ENCODE measurements at regions of chr5 and their contacts with region 1.

Region 1: GRCh38 chr5:15794052-15794985 is 294.3 kb downstream of the FBXL7 start:
- DNase-seq: no peak
- H3K4me3 ChIP-seq: no peak overlapping the region
- H3K27ac ChIP-seq: no peak overlapping the region
- H3K4me1 ChIP-seq: no peaks in the 10 kb centered on the region
- H3K27me3 ChIP-seq: no peaks in the 10 kb centered on the region
- CTCF ChIP-seq: no peak

Region 2: GRCh38 chr5:15105796-15106393 is 688.4 kb before region 1 on chr5:
- CTCF ChIA-PET with region 1: interaction called, 4 read pairs
- dilution Hi-C with region 1: no loop called
- in situ Hi-C with region 1: no loop called
- intact Hi-C with region 1: loop called (anchors 10 kb)
- DNase-seq: peak; percentile 41
- H3K4me3 ChIP-seq: no peak overlapping the region
- H3K27ac ChIP-seq: no peak overlapping the region
- H3K4me1 ChIP-seq: no peaks in the 10 kb centered on the region
- H3K27me3 ChIP-seq: no peaks in the 10 kb centered on the region
- CTCF ChIP-seq: peak; percentile 79 to 88

Region 3: GRCh38 chr5:15383469-15383868 is 410.9 kb before region 1 on chr5:
- CTCF ChIA-PET with region 1: no interaction called
- dilution Hi-C with region 1: no loop called
- in situ Hi-C with region 1: no loop called
- intact Hi-C with region 1: loop called (anchors 5 kb)
- DNase-seq: no peak
- H3K4me3 ChIP-seq: no peak overlapping the region
- H3K27ac ChIP-seq: no peak overlapping the region
- H3K4me1 ChIP-seq: no peaks in the 10 kb centered on the region
- H3K27me3 ChIP-seq: no peaks in the 10 kb centered on the region
- CTCF ChIP-seq: no peak

Region 4: DNA sequence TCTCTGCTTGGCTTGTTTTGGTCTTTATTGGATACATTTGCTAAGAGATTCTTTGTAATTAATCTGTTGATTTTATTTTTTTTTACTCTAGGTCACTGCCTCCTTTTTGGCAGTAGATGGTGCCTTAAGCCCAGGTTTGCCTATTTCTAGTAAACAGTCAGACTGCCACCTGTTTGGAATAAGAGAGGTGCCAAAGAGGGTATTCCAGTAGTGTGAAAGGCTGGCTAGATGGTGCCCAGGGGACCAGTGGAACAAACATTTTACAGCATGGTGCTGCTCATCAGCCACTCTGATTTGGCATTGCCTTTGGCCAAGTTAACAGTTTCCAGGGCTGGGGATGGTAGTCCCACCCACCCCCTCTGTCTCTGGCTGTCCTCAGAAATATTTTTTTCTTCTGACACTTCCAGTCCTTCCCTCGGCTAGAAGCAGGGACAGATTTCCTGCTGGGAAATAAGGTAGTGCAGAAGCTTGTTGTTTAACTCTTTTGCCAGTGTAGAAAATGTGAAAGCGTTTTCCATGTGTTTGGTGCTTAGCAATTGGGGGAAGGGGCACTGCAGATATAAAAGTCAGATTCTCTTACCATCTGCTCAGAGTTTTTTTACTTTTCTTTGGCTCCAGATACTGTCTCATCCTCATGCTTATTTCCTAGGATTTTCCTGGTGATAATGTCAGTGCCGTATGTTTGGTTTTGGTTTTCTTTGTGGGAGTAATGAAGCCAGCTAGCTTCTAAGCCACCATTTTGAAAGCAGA is 330.9 kb before region 1 on chr5:
- CTCF ChIA-PET with region 1: no interaction called
- dilution Hi-C with region 1: no loop called
- in situ Hi-C with region 1: no loop called
- intact Hi-C with region 1: loop called (anchors 1 kb)
- DNase-seq: no peak
- H3K4me3 ChIP-seq: no peak overlapping the region
- H3K27ac ChIP-seq: no peak overlapping the region
- H3K4me1 ChIP-seq: no peaks in the 10 kb centered on the region
- H3K27me3 ChIP-seq: no peaks in the 10 kb centered on the region
- CTCF ChIP-seq: no peak

Region 5: GRCh38 chr5:15499528-15500324 is 294.6 kb before region 1 on chr5 and contains the start of gene FBXL7:
- CTCF ChIA-PET with region 1: no interaction called
- dilution Hi-C with region 1: no loop called
- in situ Hi-C with region 1: no loop called
- intact Hi-C with region 1: loop called (anchors 1 kb)
- DNase-seq: peak; percentile 52
- H3K4me3 ChIP-seq: peak within 1 kb of the TSS in 2 of 3 experiments; percentile 25 to 36
- H3K27ac ChIP-seq: no peak within 1 kb of the TSS
- H3K4me1 ChIP-seq: no peaks in the 10 kb centered on the region
- H3K27me3 ChIP-seq: peaks cover 8% of the 10 kb centered on the region
- CTCF ChIP-seq: no peak
- total RNA-seq, gene FBXL7: 1.0 to 2.4 TPM

Measured in mammary epithelial cell (primary cell).